Activated naive CD8-positive, alpha-beta T cell treated with anti-CD3 and anti-CD28 coated beads, Interleukin-2, amount 10 ng/mL, durations not matched to agents 7 days and 5 days (primary cell): ENCODE measurements at regions of chr12 and their contacts with region 1.

Region 1: DNA sequence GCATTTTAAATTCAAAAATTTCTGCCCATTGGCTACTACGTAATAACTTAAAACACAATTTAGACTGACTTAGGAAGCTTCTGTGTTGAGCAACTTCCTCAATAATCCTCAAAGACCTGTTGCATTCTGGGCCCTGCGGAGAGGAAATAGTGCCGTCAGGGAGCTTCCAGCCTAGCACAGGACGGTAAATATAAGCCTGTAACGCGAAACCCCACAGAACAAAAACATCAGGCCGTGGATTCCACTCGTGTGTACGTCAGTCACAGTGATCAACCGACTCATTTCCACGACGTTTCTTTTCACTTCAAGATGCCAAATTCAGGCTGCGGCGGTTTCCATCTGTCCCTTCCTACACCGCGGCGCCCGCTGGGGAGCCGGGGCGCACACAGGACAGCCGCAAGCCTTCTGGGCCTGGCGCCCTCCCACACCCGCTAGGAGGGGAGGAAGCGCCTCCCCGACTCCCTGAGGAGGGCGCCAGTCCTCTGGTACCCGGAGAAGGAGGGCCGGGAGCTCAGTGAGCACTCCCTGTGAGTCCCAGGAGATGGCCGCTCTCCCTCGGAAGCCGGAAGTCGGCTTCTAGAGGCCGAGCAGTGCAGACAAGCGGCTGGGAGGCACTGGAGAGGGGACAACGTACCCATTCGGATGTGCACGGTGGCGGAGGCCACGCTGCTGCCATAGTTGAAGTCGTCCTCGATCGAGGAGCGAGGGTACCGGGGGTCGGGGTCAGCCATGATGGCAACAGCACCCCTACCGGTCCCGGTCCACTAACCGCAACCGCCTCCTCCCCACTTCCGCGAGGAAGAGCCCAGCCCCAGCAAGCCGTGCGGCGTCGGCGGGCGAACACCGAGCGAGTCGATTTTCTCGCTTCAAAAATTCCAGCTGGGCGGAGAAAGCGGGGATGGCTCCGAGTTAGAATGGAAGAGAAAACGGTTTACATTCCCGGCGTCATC is at the start of gene TMBIM4:
- DNase-seq: peak; percentile 91
- ATAC-seq: peak; percentile 81
- H3K4me3 Mint-ChIP-seq: peak within 1 kb of the TSS; percentile 96
- H3K27ac Mint-ChIP-seq: peak within 1 kb of the TSS; percentile 99
- H3K4me1 Mint-ChIP-seq: peaks cover 27% of the 10 kb centered on the region
- H3K27me3 Mint-ChIP-seq: no peaks in the 10 kb centered on the region
- total RNA-seq, gene TMBIM4: 72.1 to 77.1 TPM

Region 2: DNA sequence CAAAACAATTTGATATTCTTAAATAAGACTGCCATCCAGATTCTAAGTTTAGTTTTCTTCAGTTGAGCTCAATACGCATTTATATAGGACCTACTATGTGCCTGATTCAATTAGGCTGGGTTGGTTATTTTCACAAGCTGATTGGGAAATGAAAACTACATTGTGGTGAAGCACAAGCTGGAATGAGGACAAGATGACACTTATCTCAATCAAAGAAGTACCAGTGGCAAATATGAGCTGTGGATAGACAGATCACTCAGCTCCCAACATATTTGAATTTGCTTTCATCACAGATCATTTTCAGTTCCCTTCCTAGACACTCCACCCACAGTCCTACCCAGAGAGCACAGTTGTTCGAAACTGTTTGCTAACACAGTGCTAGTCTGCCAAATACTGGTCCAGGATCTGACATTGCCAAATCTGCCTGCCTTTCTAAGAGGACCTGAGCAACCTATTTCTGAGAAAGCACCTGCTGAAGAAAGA is 113.6 kb before region 1 on chr12:
- POLR2A ChIA-PET with region 1: no interaction called
- DNase-seq: no peak
- ATAC-seq: no peak
- H3K4me3 Mint-ChIP-seq: no peak overlapping the region
- H3K27ac Mint-ChIP-seq: no peak overlapping the region
- H3K4me1 Mint-ChIP-seq: no peaks in the 10 kb centered on the region
- H3K27me3 Mint-ChIP-seq: peaks cover 10% of the 10 kb centered on the region

Region 3: DNA sequence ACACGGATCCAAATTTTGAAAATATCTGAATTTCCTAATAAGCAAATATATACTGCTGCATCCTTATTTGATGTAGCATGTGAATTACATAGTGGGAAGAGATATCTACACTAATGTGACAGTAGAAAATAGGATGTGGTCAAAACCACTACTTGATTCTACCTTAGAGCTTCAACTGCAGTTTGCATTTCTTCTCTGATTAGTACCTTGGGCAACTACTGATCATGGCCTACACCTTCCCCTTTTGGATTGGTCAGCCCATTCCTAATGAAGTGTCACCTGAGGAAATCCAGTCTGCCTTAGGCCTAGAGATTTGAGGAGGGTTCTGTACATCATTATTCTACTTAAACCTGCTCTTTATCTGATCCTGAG is 49.6 kb before region 1 on chr12:
- POLR2A ChIA-PET with region 1: no interaction called
- DNase-seq: no peak
- ATAC-seq: peak; percentile 81
- H3K4me3 Mint-ChIP-seq: peak overlapping the region; percentile 9
- H3K27ac Mint-ChIP-seq: no peak overlapping the region
- H3K4me1 Mint-ChIP-seq: peaks cover 15% of the 10 kb centered on the region
- H3K27me3 Mint-ChIP-seq: no peaks in the 10 kb centered on the region

Region 4: DNA sequence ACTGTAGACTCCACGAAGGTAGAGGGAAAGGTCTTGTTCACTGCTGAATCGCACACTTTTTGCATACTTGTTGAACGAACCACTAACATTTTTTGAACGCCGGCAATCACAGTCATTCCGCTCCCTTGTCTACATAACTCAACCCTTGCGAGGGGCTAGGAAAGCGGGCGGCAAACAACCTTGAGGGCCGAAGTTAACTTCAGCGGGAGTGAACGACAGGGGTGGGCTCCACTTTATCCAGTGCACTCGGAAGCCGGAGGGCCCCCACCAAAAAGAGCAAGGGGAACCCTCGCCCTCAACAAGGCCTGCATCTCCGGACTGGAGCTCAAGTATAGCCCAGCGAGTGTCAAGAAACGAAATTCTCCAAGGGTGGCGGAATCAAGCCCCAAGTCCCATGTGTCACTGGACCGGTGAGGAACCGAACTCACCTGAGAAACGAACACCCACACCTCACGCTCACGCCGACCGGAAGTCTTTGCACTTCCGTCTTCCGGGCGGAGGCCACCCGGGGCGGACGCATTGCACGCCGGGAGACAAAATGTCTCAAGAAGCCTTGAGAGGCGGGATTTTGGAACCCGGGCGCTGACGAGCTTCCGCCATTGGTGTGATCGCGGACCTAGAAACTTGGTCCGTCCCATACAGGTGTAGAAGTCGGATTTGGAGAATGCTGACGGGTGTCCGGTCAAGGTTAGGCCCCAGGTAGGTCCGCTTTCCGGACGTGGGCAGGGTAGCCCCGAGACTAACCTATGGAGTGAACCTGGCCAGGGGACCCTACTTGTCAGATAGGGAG is 39.0 kb before region 1 on chr12 and contains the start of gene LLPH:
- POLR2A ChIA-PET with region 1: interaction called, 50 read pairs
- DNase-seq: peak; percentile 87
- ATAC-seq: peak; percentile 88
- H3K4me3 Mint-ChIP-seq: peak within 1 kb of the TSS; percentile 97
- H3K27ac Mint-ChIP-seq: peak within 1 kb of the TSS; percentile 94
- H3K4me1 Mint-ChIP-seq: peaks cover 44% of the 10 kb centered on the region
- H3K27me3 Mint-ChIP-seq: no peaks in the 10 kb centered on the region
- total RNA-seq, gene LLPH: 35.1 to 36.0 TPM

Region 5: GRCh38 chr12:66247741-66248140 is 78.2 kb after region 1 on chr12:
- POLR2A ChIA-PET with region 1: no interaction called
- DNase-seq: no peak
- ATAC-seq: no peak
- H3K4me3 Mint-ChIP-seq: no peak overlapping the region
- H3K27ac Mint-ChIP-seq: no peak overlapping the region
- H3K4me1 Mint-ChIP-seq: no peaks in the 10 kb centered on the region
- H3K27me3 Mint-ChIP-seq: peaks cover 4% of the 10 kb centered on the region

Region 6: GRCh38 chr12:66288121-66288520 is 118.6 kb after region 1 on chr12:
- POLR2A ChIA-PET with region 1: interaction called, 10 read pairs
- DNase-seq: peak; percentile 39
- ATAC-seq: peak; percentile 88
- H3K4me3 Mint-ChIP-seq: peak overlapping the region; percentile 49
- H3K27ac Mint-ChIP-seq: peak overlapping the region; percentile 77
- H3K4me1 Mint-ChIP-seq: peaks cover 58% of the 10 kb centered on the region
- H3K27me3 Mint-ChIP-seq: peaks cover 2% of the 10 kb centered on the region